Posterior vena cava (tissue), 2 donors: ENCODE measurements at regions of chr14 and their contacts with region 1.

Region 1: DNA sequence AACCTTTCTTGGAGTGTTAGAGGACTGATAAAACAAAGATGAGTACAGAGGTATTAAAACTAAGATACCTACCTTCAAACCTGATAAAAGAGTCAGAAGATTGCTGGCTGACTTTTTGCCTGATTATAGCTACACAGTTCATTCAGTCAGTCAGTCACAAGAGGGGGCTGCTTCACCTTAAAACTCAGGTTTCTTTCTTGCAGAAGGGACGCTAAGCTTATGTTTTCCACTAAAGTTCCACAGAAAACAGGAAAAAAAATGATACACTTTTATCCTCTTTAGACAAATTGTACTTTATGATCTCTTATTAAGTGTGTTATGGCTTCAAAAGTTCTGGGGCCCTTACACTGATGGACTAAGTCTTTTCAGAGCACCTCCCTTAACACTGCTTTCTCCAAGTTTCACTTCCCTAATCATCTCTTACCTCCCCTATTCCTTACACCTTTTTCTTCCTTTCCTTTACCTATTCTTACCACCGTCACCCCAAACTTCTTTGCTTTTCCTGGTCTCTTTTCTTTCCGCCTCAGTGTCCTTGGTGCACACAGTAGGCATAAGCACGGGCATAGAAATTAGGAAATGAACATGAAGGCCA is 448.7 kb upstream of the OR4E1 start:
- DNase-seq: no peak

Region 2: GRCh38 chr14:21317398-21317797 is 804.9 kb before region 1 on chr14:
- intact Hi-C with region 1: loop called in 1 of 2 experiments (anchors 10 kb)
- DNase-seq: no peak

Region 3: DNA sequence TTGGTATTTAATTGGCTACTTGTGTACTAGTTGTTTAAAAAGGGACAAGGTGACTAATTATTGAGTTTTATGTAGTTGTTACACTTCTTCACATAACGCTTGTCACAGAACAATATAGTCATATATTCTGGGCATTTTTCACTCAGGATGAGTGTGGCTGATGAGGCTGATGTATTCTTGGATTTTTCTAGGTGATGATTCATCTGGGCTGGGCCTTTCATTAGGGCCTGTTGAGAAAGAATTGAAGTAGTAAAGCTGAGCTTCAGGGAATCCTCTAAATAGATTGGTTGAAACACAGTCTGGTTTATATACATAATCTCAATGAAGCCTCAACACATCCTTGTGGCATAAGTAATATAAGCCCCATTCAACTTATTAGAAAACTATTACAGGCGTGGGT is 21.0 kb after region 1 on chr14:
- intact Hi-C with region 1: no loop called
- DNase-seq: no peak